OCI-LY7 (cell line): ENCODE measurements at regions of chr1 and their contacts with region 1.

Region 1: DNA sequence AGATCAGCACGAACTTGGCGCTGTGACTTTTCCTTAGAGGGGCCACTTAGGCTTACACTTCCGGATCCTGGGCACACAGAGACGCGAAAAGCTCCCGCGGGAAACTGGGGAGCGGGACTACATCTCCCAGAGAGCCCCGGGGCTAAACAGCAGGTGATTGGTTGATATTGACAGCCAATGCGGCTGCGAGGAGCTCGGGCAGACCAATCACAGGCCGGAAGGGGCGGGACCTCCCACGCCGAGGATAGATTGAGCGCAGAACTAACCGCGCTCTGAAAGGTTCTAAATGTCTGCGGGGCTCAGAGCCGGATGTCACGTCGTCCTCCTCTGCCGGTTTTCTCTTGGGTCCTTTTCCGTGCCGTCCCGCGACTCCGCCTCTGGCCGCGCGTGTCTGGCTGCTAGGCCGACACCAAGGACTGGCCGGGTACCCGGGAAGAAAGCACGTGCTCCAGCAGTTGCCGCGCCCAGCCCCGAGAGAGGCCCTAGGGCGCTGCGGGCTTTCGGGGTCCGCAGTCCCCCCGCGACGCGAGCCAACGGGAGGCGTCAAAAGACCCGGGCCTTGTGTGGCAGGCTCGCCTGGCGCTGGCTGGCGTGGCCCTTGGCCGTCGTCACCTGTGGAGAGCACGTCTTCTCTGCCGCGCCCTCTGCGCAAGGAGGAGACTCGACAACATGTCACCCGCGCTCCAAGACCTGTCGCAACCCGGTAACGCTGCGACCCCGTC is at the start of gene MTR:
- DNase-seq: peak; percentile 98
- H3K4me3 ChIP-seq: peak within 1 kb of the TSS; percentile 99
- H3K27ac ChIP-seq: peak within 1 kb of the TSS; percentile 77
- H3K4me1 ChIP-seq: peaks cover 27% of the 10 kb centered on the region
- CTCF ChIP-seq: no peak
- total RNA-seq, gene MTR: 22.3 and 23.0 TPM in 2 replicates

Region 2: DNA sequence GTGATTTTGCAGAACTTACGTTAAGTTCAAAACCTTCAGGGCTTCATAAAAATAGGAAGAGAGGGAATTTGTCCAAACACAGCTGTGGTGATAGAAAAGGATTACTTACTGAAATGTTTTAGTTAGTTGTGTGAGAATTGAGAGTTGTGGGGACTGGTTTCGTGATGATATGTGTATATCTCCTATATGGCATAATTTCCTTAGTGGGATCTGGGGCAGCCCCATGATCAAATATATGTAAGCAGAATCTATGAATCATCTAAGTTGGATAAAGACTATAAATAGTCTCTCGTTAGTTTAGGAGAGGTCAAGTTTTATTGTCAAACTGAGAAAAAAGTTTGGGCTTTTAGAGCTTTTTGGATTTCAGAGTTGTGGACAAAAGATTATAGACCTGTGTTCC is 14.8 kb after region 1 on chr1:
- CTCF ChIA-PET with region 1: no interaction called
- POLR2A ChIA-PET with region 1: interaction called, 20 read pairs
- intact Hi-C with region 1: no loop called
- DNase-seq: no peak
- H3K4me3 ChIP-seq: no peak overlapping the region
- H3K27ac ChIP-seq: no peak overlapping the region
- H3K4me1 ChIP-seq: no peaks in the 10 kb centered on the region
- CTCF ChIP-seq: no peak